Mammary epithelial cell (primary cell): ENCODE measurements at regions of chr2 and their contacts with region 1.

Region 1: GRCh38 chr2:191811807-191812602 is 34.9 kb downstream of the CAVIN2 start:
- DNase-seq: peak; percentile 38
- H3K4me3 ChIP-seq: no peak overlapping the region
- H3K27ac ChIP-seq: no peak overlapping the region
- H3K4me1 ChIP-seq: no peaks in the 10 kb centered on the region
- H3K27me3 ChIP-seq: no peaks in the 10 kb centered on the region
- CTCF ChIP-seq: peak; percentile 88 to 91

Region 2: DNA sequence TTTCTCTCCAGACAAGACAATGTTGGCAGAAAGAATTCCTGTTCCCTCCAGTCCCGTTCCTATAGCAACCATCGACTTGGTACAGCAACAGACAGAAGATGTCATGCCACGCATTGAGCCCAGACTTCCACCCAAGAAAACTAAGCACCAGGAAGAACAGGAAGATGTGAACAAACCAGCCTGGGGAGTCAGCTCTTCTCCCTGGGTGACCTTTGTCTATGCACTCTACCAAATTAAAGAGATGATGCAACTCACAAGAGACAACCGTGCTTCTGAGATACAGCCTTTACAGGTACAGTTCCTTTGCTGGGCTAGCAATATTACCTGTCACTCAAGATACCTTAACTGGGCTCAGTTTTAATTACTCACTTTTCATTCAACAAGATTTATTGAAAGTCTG is 1314.6 kb before region 1 on chr2:
- CTCF ChIA-PET with region 1: no interaction called
- dilution Hi-C with region 1: no loop called
- in situ Hi-C with region 1: no loop called
- intact Hi-C with region 1: no loop called
- DNase-seq: peak; percentile 8
- H3K4me3 ChIP-seq: no peak overlapping the region
- H3K27ac ChIP-seq: no peak overlapping the region
- H3K4me1 ChIP-seq: no peaks in the 10 kb centered on the region
- H3K27me3 ChIP-seq: no peaks in the 10 kb centered on the region
- CTCF ChIP-seq: no peak

Region 3: GRCh38 chr2:191728750-191729624 is 83.0 kb before region 1 on chr2:
- CTCF ChIA-PET with region 1: no interaction called
- dilution Hi-C with region 1: no loop called
- in situ Hi-C with region 1: no loop called
- intact Hi-C with region 1: no loop called
- DNase-seq: no peak
- H3K4me3 ChIP-seq: no peak overlapping the region
- H3K27ac ChIP-seq: no peak overlapping the region
- H3K4me1 ChIP-seq: peaks cover 1% of the 10 kb centered on the region
- H3K27me3 ChIP-seq: no peaks in the 10 kb centered on the region
- CTCF ChIP-seq: peak in 1 of 2 donors; percentile 7

Region 4: DNA sequence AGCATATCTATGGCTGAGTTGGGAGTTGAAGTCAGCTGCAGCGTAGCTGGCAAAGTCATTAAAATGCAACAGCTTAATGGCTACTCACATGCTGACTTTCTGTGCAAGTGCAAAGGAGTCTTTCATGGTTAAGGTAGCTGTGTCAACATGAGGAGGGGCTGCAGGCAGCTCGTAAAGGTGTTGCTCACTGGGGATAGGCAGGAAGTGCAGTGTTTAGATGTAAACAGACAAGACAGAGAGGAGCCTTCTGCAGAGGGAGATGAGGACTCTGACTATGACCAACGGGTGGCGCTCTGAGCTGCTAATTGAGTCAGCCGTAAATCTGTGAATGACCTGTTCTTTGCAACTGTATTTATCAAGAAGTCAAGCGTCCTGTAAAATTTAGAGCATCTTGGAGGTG is 57.2 kb after region 1 on chr2:
- CTCF ChIA-PET with region 1: no interaction called
- dilution Hi-C with region 1: no loop called
- in situ Hi-C with region 1: no loop called
- intact Hi-C with region 1: loop called (anchors 1 kb)
- DNase-seq: no peak
- H3K4me3 ChIP-seq: no peak overlapping the region
- H3K27ac ChIP-seq: no peak overlapping the region
- H3K4me1 ChIP-seq: peaks cover 37% of the 10 kb centered on the region
- H3K27me3 ChIP-seq: no peaks in the 10 kb centered on the region
- CTCF ChIP-seq: peak; percentile 15 to 44

Region 5: DNA sequence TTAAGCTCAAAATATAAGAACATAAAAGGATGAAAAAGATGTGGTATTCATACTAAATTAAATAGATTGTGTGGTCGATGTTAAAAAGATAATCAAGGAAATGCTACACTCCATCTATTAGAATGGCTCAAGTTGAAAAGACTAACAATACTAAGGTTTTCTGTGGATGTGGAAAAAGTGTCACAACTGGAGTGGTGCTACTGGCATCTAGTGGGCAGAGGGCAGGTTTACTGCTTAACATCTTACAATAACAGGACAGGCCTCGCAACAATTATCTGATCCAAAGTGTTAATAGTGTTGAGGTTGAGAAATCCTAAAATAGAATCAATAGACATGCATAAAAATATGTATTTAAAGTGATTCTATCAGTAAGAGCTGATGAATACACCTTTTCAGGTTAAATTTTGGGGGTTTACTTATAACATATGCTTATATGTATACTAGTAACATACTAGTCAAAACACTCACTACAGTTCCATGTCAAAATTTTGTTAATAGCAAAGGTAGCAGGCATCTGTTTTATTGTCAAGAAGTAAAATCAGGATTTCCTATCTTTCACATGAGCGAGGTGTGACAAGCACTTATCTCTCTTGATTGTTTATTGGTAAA is 474.2 kb after region 1 on chr2:
- CTCF ChIA-PET with region 1: no interaction called
- dilution Hi-C with region 1: no loop called
- in situ Hi-C with region 1: loop called in 1 of 2 experiments (anchors 25 kb)
- intact Hi-C with region 1: loop called (anchors 1 kb)
- DNase-seq: peak; percentile 35
- H3K4me3 ChIP-seq: no peak overlapping the region
- H3K27ac ChIP-seq: no peak overlapping the region
- H3K4me1 ChIP-seq: no peaks in the 10 kb centered on the region
- H3K27me3 ChIP-seq: no peaks in the 10 kb centered on the region
- CTCF ChIP-seq: peak; percentile 59 to 81

Region 6: DNA sequence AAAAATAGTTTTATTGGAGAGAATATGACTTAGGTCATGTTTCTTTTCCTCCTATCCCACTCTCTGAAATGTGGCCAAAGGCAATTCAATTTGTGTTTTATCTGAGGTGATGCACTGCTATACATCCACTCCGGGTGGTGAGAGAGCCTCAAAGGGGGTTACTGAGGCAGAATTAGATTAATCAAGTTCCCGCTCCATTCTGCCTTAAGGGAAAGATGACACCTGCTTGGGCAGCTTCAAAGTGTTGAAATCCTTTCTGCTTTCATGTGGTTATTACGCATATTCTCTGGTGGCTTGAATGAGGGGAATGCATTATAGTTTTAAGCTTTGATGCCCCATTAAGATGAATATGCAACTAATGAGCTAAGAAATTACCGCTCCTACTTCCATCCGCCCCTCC is 595.7 kb after region 1 on chr2:
- CTCF ChIA-PET with region 1: no interaction called
- dilution Hi-C with region 1: no loop called
- in situ Hi-C with region 1: no loop called
- intact Hi-C with region 1: no loop called
- DNase-seq: no peak
- H3K4me3 ChIP-seq: no peak overlapping the region
- H3K27ac ChIP-seq: no peak overlapping the region
- H3K4me1 ChIP-seq: no peaks in the 10 kb centered on the region
- H3K27me3 ChIP-seq: peaks cover 3% of the 10 kb centered on the region
- CTCF ChIP-seq: no peak